Activated CD4-positive, alpha-beta memory T cell treated with anti-CD3 and anti-CD28 coated beads for 36 hours (primary cell): ENCODE measurements at regions of chr1 and their contacts with region 1.

Region 1: DNA sequence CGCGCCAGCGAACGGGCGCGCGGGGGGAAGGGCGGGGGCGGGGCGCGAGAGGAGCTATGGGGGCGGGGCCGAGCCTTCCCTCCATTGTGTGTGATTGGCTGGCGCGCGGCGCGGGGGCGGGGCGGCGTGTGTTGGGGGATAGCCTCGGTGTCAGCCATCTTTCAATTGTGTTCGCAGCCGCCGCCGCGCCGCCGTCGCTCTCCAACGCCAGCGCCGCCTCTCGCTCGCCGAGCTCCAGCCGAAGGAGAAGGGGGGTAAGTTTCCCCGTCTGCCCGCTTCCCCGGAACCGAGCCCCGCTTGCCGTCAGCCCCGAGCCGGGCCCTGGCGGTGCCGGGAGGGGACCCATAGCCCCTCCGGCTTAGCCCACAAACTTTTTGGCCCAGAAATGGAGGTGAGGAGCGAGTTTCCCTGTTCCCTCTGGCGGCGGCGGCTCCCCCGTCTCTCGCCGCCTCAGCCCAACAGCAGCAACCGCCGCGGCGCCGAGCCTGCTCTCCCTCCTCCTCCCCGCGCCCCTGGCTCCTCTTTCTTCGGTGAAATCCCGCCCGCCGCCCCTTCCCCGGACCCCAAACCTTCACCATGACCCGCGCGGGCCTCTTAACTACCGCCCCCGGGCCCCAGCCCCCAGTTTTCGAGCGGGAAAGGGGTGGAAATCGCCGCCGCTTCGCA is at the start of gene H3-3A:
- DNase-seq: peak; percentile 98
- H3K4me3 Mint-ChIP-seq: peak within 1 kb of the TSS; percentile 100
- H3K27ac Mint-ChIP-seq: peak within 1 kb of the TSS; percentile 99
- H3K4me1 Mint-ChIP-seq: peaks cover 42% of the 10 kb centered on the region
- H3K27me3 Mint-ChIP-seq: no peaks in the 10 kb centered on the region
- total RNA-seq, gene H3-3A: 317 to 320 TPM

Region 2: GRCh38 chr1:225710804-225711203 is 351.9 kb before region 1 on chr1:
- CTCF ChIA-PET with region 1: no interaction called
- POLR2A ChIA-PET with region 1: no interaction called
- intact Hi-C with region 1: no loop called
- DNase-seq: no peak
- H3K4me3 Mint-ChIP-seq: no peak overlapping the region
- H3K27ac Mint-ChIP-seq: no peak overlapping the region
- H3K4me1 Mint-ChIP-seq: no peaks in the 10 kb centered on the region
- H3K27me3 Mint-ChIP-seq: no peaks in the 10 kb centered on the region

Region 3: DNA sequence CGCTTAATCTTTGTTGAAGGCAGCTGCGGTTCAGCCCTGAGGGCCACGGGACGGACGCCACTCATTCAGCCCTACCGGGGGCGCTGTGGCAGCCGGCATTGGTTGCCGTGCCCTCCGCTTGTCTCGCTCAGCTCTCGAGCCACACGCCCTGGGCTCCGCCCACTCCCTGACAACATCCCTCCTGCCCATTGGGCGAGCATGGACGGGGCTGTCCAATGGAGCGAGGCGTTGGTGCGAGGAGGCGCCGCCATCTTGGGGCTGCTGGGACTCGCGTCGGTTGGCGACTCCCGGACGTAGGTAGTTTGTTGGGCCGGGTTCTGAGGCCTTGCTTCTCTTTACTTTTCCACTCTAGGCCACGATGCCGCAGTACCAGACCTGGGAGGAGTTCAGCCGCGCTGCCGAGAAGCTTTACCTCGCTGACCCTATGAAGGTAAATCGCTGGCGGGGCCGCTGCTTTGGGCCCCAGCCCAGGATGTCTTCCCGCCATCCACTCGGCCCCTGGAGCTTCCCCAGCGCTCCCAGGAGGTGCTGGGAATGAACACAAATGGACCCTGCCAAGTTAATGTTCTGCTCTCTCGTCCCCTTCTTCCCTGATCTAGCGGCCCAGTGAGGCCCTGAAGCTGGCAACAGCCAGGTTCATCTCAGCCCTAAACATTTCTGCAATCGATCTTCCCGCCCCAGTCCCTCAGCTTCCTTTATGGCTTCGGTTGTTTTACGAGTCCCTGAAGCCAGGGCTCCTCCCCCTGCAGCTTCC is 284.9 kb before region 1 on chr1 and contains the start of gene SRP9:
- CTCF ChIA-PET with region 1: interaction called, 5 read pairs
- POLR2A ChIA-PET with region 1: interaction called, 13 read pairs
- intact Hi-C with region 1: loop called (anchors 2 kb)
- DNase-seq: peak; percentile 99
- H3K4me3 Mint-ChIP-seq: no peak within 1 kb of the TSS
- H3K27ac Mint-ChIP-seq: no peak within 1 kb of the TSS
- H3K4me1 Mint-ChIP-seq: peaks cover 25% of the 10 kb centered on the region
- H3K27me3 Mint-ChIP-seq: no peaks in the 10 kb centered on the region
- total RNA-seq, gene SRP9: 294 to 314 TPM

Region 4: DNA sequence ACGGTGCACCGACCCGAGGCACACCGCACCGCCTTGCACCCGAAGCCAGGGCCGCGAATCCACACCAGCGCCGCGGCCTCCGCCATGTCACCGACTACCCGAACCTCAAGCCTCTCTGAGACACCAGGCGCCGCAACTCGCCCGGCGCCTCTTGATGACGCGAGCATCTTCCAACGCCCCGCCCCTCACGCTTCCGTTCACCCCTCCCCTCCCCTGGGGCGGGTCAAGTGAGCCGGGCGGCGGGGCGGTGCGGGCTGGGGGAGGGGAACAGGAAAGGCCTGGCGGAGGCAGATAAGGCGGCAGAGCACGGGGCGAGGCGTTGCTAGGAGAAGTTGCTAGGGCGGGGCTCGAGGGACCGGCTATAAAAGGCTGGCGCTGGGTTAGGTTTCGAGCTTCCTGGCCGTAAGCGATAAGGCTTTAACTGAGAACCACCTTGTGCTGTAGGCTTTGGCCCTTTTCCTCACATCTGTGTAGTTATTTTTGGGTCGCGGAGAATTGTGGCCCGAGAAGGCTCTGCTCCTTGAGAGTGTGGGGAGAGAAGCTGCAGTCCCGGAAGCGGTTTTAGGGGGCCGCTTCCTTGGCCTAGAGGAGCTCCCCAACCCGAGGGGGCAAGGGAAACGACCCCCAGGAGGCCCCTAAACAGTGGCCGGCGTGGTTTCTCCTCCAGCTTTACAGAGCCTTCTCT is 63.3 kb before region 1 on chr1 and contains the start of gene SDE2:
- CTCF ChIA-PET with region 1: interaction called, 12 read pairs
- POLR2A ChIA-PET with region 1: interaction called, 45 read pairs
- intact Hi-C with region 1: loop called (anchors 1 kb)
- DNase-seq: peak; percentile 100
- H3K4me3 Mint-ChIP-seq: peak within 1 kb of the TSS; percentile 100
- H3K27ac Mint-ChIP-seq: peak within 1 kb of the TSS; percentile 96
- H3K4me1 Mint-ChIP-seq: peaks cover 66% of the 10 kb centered on the region
- H3K27me3 Mint-ChIP-seq: no peaks in the 10 kb centered on the region
- total RNA-seq, gene SDE2: 18.0 to 18.2 TPM

Region 5: GRCh38 chr1:226083302-226084101 is 20.8 kb after region 1 on chr1:
- CTCF ChIA-PET with region 1: interaction called, 28 read pairs
- POLR2A ChIA-PET with region 1: interaction called, 24 read pairs
- intact Hi-C with region 1: loop called (anchors 2 kb)
- DNase-seq: peak; percentile 93
- H3K4me3 Mint-ChIP-seq: peak overlapping the region; percentile 86
- H3K27ac Mint-ChIP-seq: no peak overlapping the region
- H3K4me1 Mint-ChIP-seq: peaks cover 8% of the 10 kb centered on the region
- H3K27me3 Mint-ChIP-seq: no peaks in the 10 kb centered on the region

Region 6: GRCh38 chr1:226121587-226122400 is 59.1 kb after region 1 on chr1:
- CTCF ChIA-PET with region 1: interaction called, 78 read pairs
- POLR2A ChIA-PET with region 1: interaction called, 16 read pairs
- intact Hi-C with region 1: loop called (anchors 1 kb)
- DNase-seq: peak; percentile 78
- H3K4me3 Mint-ChIP-seq: peak overlapping the region; percentile 74
- H3K27ac Mint-ChIP-seq: peak overlapping the region; percentile 74
- H3K4me1 Mint-ChIP-seq: peaks cover 26% of the 10 kb centered on the region
- H3K27me3 Mint-ChIP-seq: no peaks in the 10 kb centered on the region

Region 7: DNA sequence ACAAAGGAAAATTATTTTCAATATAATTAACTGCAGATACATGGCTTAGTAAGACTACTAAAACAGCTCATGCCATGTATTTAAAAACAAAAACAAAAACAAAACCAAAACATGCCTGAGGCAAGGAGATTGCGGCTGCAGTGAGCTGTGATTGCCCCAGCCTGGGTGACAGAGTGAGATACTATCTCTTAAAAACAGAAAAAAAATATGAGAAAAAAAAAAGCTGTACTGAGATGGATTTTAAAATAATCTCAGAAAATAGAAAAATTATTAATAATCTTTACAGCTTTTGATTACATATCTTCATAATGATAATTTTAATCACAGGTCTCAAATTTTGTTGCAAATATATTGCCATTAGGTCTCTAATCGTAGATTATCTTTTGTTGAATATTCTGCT is 270.3 kb after region 1 on chr1:
- CTCF ChIA-PET with region 1: interaction called, 3 read pairs
- POLR2A ChIA-PET with region 1: no interaction called
- intact Hi-C with region 1: loop called (anchors 2 kb)
- DNase-seq: no peak
- H3K4me3 Mint-ChIP-seq: no peak overlapping the region
- H3K27ac Mint-ChIP-seq: no peak overlapping the region
- H3K4me1 Mint-ChIP-seq: peaks cover 15% of the 10 kb centered on the region
- H3K27me3 Mint-ChIP-seq: no peaks in the 10 kb centered on the region